ENCODE measurements at regions of chr3 and their contacts with region 1.

Region 1: DNA sequence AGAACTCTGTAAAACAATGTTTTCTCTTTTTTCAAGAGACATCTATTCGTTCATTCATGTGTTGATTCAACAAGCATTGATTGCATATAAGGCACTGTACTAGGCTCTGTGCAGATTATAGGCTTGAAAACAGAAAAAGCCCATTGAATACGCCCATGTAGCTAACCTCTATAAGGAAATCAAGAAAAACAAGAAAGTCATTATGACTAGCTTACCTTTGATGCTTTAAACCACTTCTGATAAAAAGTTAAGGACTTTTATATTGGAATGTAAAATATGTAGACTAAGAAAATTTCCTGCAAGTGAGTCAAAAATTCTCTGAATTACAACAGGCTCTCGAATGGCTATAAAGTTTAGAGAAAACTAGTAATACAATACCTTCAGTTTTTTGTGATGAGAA is 92.5 kb downstream of the BDH1 start:
- DNase-seq: no peak
- H3K4me3 ChIP-seq: no peak overlapping the region
- H3K4me3 Mint-ChIP-seq: no peak overlapping the region
- H3K27ac ChIP-seq: no peak overlapping the region
- H3K27ac Mint-ChIP-seq: no peak overlapping the region
- H3K4me1 ChIP-seq: no peaks in the 10 kb centered on the region
- H3K4me1 Mint-ChIP-seq: no peaks in the 10 kb centered on the region
- H3K27me3 ChIP-seq: peaks cover 0 to 9% of the 10 kb centered on the region in 2 donors
- H3K27me3 Mint-ChIP-seq: peaks cover 12 to 43% (median 17%) of the 10 kb centered on the region in 3 donors
- CTCF ChIP-seq: no peak

Region 2: GRCh38 chr3:197305854-197306253 is 157.4 kb before region 1 on chr3:
- intact Hi-C with region 1: loop called in 1 of 2 experiments (anchors 5 kb)
- DNase-seq: no peak
- H3K4me3 ChIP-seq: no peak overlapping the region
- H3K4me3 Mint-ChIP-seq: no peak overlapping the region
- H3K27ac ChIP-seq: no peak overlapping the region
- H3K27ac Mint-ChIP-seq: no peak overlapping the region
- H3K4me1 ChIP-seq: no peaks in the 10 kb centered on the region
- H3K4me1 Mint-ChIP-seq: peaks cover 1% of the 10 kb centered on the region
- H3K27me3 ChIP-seq: no peaks in the 10 kb centered on the region
- H3K27me3 Mint-ChIP-seq: peaks cover 13 to 17% (median 16%) of the 10 kb centered on the region in 3 donors
- CTCF ChIP-seq: no peak

Measured in CD14-positive monocyte (primary cell).